ENCODE measurements at regions of chr9 and their contacts with region 1.

Region 1: GRCh38 chr9:109975574-109976295 is 195.7 kb downstream of the PALM2AKAP2 start:
- DNase-seq: no peak
- H3K4me3 ChIP-seq: no peak overlapping the region
- H3K27ac ChIP-seq: no peak overlapping the region
- H3K27me3 ChIP-seq: no peaks in the 10 kb centered on the region
- CTCF ChIP-seq: no peak

Region 2: DNA sequence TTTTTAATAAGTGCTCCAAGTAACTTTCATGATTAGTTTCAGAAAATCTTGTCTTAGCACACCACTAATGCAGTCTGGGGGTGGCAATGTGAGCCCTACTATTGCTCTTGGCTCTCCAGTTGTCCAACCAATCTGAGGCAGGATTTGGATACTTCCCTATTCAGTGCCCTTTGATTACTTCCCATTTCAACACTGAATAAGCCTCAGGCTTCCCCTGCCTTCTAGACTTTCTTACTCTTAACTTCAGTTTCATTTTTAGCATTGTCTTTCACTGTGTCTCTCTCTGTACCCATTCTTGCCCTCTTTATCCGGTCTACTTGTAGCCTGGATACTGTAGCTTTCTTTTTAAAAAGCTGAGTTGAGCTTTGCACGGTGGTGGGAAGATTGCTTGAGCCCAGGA is 46.2 kb after region 1 on chr9:
- intact Hi-C with region 1: loop called in 1 of 2 experiments (anchors 5 kb)
- DNase-seq: no peak
- H3K4me3 ChIP-seq: no peak overlapping the region
- H3K27ac ChIP-seq: peak overlapping the region in 1 of 59 donors; percentile 8
- H3K27me3 ChIP-seq: no peaks in the 10 kb centered on the region
- CTCF ChIP-seq: no peak